CD4-positive, alpha-beta memory T cell (primary cell): ENCODE measurements at regions of chr12 and their contacts with region 1.

Region 1: GRCh38 chr12:121637231-121637914 is 11.0 kb downstream of the ORAI1 start:
- DNase-seq: peak; percentile 36 to 64 (median 49)
- H3K4me3 ChIP-seq: peak overlapping the region in 1 of 2 donors; percentile 23
- H3K4me3 Mint-ChIP-seq: peak overlapping the region; percentile 13 to 84 (median 68)
- H3K27ac ChIP-seq: peak overlapping the region; percentile 59
- H3K27ac Mint-ChIP-seq: peak overlapping the region; percentile 89 to 93 (median 90)
- H3K4me1 ChIP-seq: peaks cover 58% of the 10 kb centered on the region
- H3K4me1 Mint-ChIP-seq: peaks cover 31 to 59% (median 44%) of the 10 kb centered on the region in 4 donors
- H3K27me3 ChIP-seq: no peaks in the 10 kb centered on the region
- H3K27me3 Mint-ChIP-seq: no peaks in the 10 kb centered on the region

Region 2: GRCh38 chr12:121499929-121500793 is 137.2 kb before region 1 on chr12:
- CTCF ChIA-PET with region 1: no interaction called
- POLR2A ChIA-PET with region 1: no interaction called
- intact Hi-C with region 1: no loop called
- DNase-seq: peak; percentile 62 to 72 (median 71)
- H3K4me3 ChIP-seq: no peak overlapping the region
- H3K4me3 Mint-ChIP-seq: peak overlapping the region in 1 of 8 donors; percentile 11
- H3K27ac ChIP-seq: no peak overlapping the region
- H3K27ac Mint-ChIP-seq: peak overlapping the region in 3 of 7 donors; percentile 17 to 74 (median 63)
- H3K4me1 ChIP-seq: peaks cover 17% of the 10 kb centered on the region
- H3K4me1 Mint-ChIP-seq: peaks cover 8 to 21% (median 15%) of the 10 kb centered on the region in 4 donors
- H3K27me3 ChIP-seq: no peaks in the 10 kb centered on the region
- H3K27me3 Mint-ChIP-seq: no peaks in the 10 kb centered on the region

Region 3: GRCh38 chr12:121614872-121615467 is 22.4 kb before region 1 on chr12:
- CTCF ChIA-PET with region 1: no interaction called
- POLR2A ChIA-PET with region 1: no interaction called
- intact Hi-C with region 1: no loop called
- DNase-seq: peak in 2 of 5 donors; percentile 14 to 16
- H3K4me3 ChIP-seq: no peak overlapping the region
- H3K4me3 Mint-ChIP-seq: peak overlapping the region in 3 of 8 donors; percentile 6 to 42 (median 22)
- H3K27ac ChIP-seq: no peak overlapping the region
- H3K27ac Mint-ChIP-seq: peak overlapping the region in 6 of 7 donors; percentile 13 to 74 (median 60)
- H3K4me1 ChIP-seq: peaks cover 4% of the 10 kb centered on the region
- H3K4me1 Mint-ChIP-seq: peaks cover 6 to 18% (median 7%) of the 10 kb centered on the region in 4 donors
- H3K27me3 ChIP-seq: no peaks in the 10 kb centered on the region
- H3K27me3 Mint-ChIP-seq: no peaks in the 10 kb centered on the region

Region 4: DNA sequence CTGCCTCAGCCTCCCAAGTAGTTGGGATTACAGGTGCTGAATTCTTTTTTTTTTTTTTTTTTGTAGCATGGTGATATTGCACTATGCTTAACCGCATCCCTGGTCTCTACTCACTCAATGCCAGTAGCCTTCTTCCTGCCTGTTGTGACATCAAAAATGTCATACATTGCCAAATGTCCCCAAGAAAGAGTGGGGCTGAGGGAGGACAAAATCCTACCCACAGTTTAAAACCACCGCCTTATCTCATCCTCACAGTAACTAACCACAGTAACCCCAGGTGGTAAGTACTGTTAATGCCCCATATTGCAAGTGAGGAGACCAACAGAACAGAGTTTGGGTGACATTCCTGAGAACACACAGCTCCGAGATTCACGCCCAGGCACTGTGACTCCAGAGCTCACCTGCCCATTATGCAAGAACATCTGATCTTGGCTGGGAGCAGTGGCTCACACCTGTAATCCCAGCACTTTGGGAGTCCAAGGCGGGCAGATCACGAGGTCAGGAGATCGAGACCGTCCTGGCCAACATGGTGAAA is 12.5 kb after region 1 on chr12:
- CTCF ChIA-PET with region 1: interaction called, 5 read pairs
- POLR2A ChIA-PET with region 1: interaction called, 36 read pairs
- intact Hi-C with region 1: no loop called
- DNase-seq: peak; percentile 47 to 65 (median 54)
- H3K4me3 ChIP-seq: no peak overlapping the region
- H3K4me3 Mint-ChIP-seq: peak overlapping the region in 7 of 8 donors; percentile 6 to 79 (median 53)
- H3K27ac ChIP-seq: peak overlapping the region; percentile 10
- H3K27ac Mint-ChIP-seq: peak overlapping the region; percentile 79 to 95 (median 87)
- H3K4me1 ChIP-seq: peaks cover 21% of the 10 kb centered on the region
- H3K4me1 Mint-ChIP-seq: peaks cover 20 to 39% (median 29%) of the 10 kb centered on the region in 4 donors
- H3K27me3 ChIP-seq: no peaks in the 10 kb centered on the region
- H3K27me3 Mint-ChIP-seq: no peaks in the 10 kb centered on the region

Region 5: GRCh38 chr12:121657305-121658008 is 20.1 kb after region 1 on chr12:
- CTCF ChIA-PET with region 1: interaction called, 8 read pairs
- POLR2A ChIA-PET with region 1: interaction called, 50 read pairs
- intact Hi-C with region 1: loop called (anchors 2 kb)
- DNase-seq: no peak
- H3K4me3 ChIP-seq: no peak overlapping the region
- H3K4me3 Mint-ChIP-seq: peak overlapping the region; percentile 8 to 94 (median 62)
- H3K27ac ChIP-seq: no peak overlapping the region
- H3K27ac Mint-ChIP-seq: peak overlapping the region; percentile 78 to 100 (median 99)
- H3K4me1 ChIP-seq: peaks cover 56% of the 10 kb centered on the region
- H3K4me1 Mint-ChIP-seq: peaks cover 41 to 77% (median 55%) of the 10 kb centered on the region in 4 donors
- H3K27me3 ChIP-seq: no peaks in the 10 kb centered on the region
- H3K27me3 Mint-ChIP-seq: no peaks in the 10 kb centered on the region

Region 6: GRCh38 chr12:121872546-121873215 is 235.3 kb after region 1 on chr12:
- CTCF ChIA-PET with region 1: no interaction called
- POLR2A ChIA-PET with region 1: no interaction called
- intact Hi-C with region 1: no loop called
- DNase-seq: no peak
- H3K4me3 ChIP-seq: no peak overlapping the region
- H3K4me3 Mint-ChIP-seq: no peak overlapping the region
- H3K27ac ChIP-seq: no peak overlapping the region
- H3K27ac Mint-ChIP-seq: peak overlapping the region in 1 of 7 donors; percentile 66
- H3K4me1 ChIP-seq: no peaks in the 10 kb centered on the region
- H3K4me1 Mint-ChIP-seq: no peaks in the 10 kb centered on the region
- H3K27me3 ChIP-seq: no peaks in the 10 kb centered on the region
- H3K27me3 Mint-ChIP-seq: no peaks in the 10 kb centered on the region